Lower lobe of right lung (tissue), 2 donors: ENCODE measurements at regions of chr4 and their contacts with region 1.

Region 1: DNA sequence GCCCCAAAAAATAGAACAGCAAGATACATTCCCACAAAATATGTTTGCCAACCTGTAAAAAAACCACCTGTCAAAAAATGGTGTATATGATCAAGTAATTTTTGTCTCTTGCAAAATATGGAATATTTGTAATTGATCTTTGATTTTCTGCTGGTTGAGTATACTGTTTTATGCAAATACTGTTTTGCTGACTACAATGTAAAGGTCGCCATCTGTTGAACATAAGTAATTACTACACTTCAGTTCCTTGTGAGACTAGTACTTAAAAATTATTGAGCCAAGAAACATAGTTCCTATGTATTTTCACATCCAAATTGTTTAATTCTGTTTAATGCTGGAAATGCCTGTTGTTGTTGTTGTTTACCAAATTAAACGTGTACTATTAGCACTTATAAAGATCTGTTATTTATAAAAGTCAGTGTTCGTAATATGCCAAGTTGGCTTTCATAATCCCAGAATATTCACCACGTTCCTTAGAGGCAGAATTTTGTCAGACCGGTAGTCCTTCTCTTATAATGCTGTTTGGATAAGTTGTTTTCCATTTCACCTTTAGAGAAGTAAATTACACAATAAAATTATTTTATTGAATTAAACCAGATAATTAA is 144.2 kb downstream of the PDLIM5 start:
- DNase-seq: no peak
- ATAC-seq: peak; percentile 49 to 75
- H3K4me3 ChIP-seq: no peak overlapping the region
- H3K27ac ChIP-seq: no peak overlapping the region
- H3K4me1 ChIP-seq: no peaks in the 10 kb centered on the region
- H3K27me3 ChIP-seq: no peaks in the 10 kb centered on the region
- CTCF ChIP-seq: peak; percentile 73

Region 2: DNA sequence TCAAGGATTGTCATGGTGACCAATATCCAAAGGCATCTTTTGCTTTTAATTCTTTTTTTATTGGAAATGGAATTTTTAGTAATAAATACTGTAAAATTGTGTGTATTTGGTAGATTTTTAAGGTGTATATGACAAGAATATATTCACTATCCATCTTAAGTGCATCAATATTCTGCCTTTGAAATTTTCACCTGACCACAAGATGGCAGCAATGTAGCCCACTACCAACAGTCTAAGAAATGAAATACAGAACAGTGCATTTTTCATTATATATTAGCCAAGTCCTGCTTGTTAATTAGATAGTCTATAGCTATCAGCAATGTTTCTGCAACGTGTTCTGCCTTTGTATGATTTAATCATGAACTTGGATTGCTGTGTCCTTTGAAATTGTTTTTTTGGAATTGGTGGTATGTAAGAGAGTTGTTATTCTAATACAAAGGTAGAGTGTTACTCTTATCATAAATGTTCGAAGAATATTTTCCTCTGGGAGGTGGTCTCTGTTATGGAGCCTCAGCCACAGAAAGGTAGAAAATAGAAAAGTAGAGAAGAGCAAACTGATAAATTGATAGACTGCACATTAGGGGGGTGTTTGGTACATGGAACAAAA is 291.5 kb before region 1 on chr4:
- intact Hi-C with region 1: loop called (anchors 10 kb)
- DNase-seq: no peak
- ATAC-seq: peak in 1 of 2 donors; percentile 62
- H3K4me3 ChIP-seq: no peak overlapping the region
- H3K27ac ChIP-seq: no peak overlapping the region
- H3K4me1 ChIP-seq: no peaks in the 10 kb centered on the region
- H3K27me3 ChIP-seq: no peaks in the 10 kb centered on the region
- CTCF ChIP-seq: peak; percentile 49

Region 3: DNA sequence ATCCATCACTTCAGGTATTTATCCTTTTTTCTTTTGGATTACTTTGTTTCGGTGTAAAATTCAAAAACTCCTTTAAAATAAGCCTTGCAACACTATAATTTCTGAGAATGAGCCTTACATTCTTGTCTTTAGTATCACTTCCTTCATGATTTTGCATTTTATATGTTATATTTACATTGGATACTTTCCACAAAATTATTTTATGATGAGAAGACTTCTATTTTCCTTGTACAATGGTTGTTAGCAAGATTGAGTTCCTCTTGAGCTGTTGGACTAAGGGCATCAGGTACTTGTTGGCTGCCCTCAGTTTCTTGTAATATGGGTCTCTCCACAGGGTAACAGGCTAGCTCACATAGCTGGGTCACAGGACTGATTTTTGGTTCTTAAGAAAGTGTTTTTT is 230.7 kb before region 1 on chr4:
- intact Hi-C with region 1: no loop called
- DNase-seq: no peak
- ATAC-seq: no peak
- H3K4me3 ChIP-seq: no peak overlapping the region
- H3K27ac ChIP-seq: no peak overlapping the region
- H3K4me1 ChIP-seq: no peaks in the 10 kb centered on the region
- H3K27me3 ChIP-seq: no peaks in the 10 kb centered on the region
- CTCF ChIP-seq: no peak

Region 4: GRCh38 chr4:94406668-94407437 is 189.1 kb before region 1 on chr4:
- intact Hi-C with region 1: loop called (anchors 5 kb)
- DNase-seq: peak; percentile 57
- ATAC-seq: peak; percentile 80 to 85
- H3K4me3 ChIP-seq: no peak overlapping the region
- H3K27ac ChIP-seq: no peak overlapping the region
- H3K4me1 ChIP-seq: peaks cover 6% of the 10 kb centered on the region
- H3K27me3 ChIP-seq: no peaks in the 10 kb centered on the region
- CTCF ChIP-seq: peak; percentile 87

Region 5: DNA sequence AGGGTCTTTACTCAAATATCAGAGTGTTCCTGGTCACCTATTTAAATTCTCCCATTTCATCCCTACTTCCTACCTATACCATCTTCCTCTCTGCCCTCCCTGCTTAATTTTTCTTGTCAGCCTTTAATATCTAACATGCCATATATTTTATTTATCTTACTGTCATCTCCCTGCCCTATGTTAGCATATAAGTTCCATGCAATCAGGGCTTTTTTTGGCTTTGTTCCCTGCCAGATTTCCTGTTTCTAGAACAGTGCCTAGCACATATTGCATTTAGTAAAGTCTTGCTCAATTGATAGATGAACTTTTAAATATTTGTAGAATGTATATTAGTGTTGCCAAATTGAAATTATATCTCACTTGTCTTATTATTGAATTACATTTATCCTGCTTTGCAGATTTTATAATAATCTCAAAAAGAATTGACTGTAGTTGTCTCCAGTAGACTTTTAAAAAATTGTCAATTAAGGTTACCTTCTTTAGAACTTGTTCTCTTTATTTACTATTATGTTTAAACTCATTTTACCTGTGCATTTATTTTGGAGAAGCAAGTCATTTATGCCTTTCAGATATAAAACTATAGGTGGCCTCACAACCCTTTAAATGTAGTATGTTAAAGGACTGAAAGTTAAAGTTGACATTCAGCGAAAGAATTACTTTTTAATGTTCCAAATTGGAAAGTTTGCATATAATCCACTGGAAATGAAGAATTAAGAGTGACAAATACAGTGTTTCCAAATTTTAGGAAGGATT is 53.6 kb after region 1 on chr4:
- intact Hi-C with region 1: no loop called
- DNase-seq: no peak
- ATAC-seq: no peak
- H3K4me3 ChIP-seq: no peak overlapping the region
- H3K27ac ChIP-seq: no peak overlapping the region
- H3K4me1 ChIP-seq: no peaks in the 10 kb centered on the region
- H3K27me3 ChIP-seq: no peaks in the 10 kb centered on the region
- CTCF ChIP-seq: no peak